Cardiac septum (tissue), 1 donor: ENCODE measurements at regions of chr2 and their contacts with region 1.

Region 1: DNA sequence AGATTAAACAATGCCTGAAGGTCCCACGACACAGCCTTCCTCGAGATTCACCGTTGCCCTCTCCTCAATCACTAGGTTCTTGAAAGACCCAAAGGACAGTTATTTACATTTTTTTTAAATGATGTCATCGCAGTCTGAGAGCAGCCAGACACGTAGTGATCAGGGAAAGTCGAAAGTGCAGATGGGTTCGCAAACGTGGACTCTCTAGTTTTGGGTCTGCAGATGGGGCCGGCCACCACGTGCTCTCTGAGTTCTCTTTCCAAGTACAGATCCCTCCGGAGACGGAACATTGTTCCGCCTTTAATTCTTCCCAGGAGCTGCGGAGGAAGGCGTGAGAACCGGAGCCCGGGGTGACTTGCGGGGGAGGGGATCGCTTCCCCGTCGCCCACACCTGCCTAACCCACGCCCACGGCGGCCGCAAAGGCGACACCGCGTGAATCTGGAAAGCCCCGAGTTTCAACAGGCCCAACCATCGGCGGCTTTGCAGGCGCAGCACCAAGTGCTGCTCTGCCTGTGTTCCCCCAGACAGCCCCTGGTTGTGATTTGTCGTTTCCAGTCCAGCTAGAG is 54.3 kb downstream of the PKDCC start:
- DNase-seq: peak; percentile 84

Region 2: DNA sequence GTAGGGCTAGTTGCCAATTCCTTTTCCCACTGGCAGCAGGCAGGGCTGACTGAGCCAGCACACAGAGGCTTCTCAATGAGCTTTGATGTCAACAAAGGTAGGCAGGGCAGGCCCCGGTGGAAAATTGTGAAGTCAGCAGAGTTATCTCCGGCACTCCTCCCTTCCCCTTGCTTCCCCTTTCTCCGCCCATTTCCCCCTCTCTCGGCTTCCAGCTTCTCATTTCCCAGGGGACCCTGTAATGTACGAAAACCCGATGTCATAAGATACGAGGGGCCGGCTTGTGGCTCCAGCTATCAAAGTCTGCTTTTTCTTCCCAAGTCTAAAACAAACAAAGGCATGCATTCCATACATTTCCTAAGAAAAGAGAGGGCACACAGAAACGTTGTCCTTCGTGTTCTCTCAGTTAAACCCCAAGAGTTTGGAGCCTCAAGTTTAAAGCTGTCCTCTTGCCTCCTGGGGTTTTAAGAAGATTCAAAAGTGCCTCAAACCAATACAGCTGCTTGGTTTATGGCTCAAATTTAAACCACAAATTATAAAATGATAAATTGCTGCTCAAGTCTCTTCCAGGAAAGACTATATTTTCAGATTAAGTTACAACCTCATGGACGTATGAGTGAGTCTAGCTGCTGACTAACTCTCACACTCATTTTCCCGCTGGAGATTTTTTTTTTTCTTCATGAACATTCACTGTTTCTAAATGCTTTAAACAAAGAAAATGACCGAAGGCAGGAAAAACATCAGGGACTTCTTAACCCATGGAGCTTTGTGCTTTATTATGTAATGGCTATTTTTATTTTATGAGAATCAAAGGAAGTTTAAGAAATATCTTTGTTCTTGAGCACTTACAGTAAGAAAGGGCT is 39.8 kb after region 1 on chr2:
- intact Hi-C with region 1: loop called (anchors 2 kb)
- DNase-seq: peak; percentile 90